Activated naive CD4-positive, alpha-beta T cell treated with anti-CD3 and anti-CD28 coated beads for 36 hours (primary cell): ENCODE measurements at regions of chr2 and their contacts with region 1.

Region 1: GRCh38 chr2:74250189-74250631 is 51.8 kb downstream of the MTHFD2 start:
- DNase-seq: peak; percentile 68
- H3K4me3 Mint-ChIP-seq: no peak overlapping the region
- H3K27ac Mint-ChIP-seq: no peak overlapping the region
- H3K4me1 Mint-ChIP-seq: peaks cover 2% of the 10 kb centered on the region
- H3K27me3 Mint-ChIP-seq: no peaks in the 10 kb centered on the region

Region 2: GRCh38 chr2:74261204-74261864 is 11.1 kb after region 1 on chr2:
- CTCF ChIA-PET with region 1: interaction called, 13 read pairs
- intact Hi-C with region 1: no loop called
- DNase-seq: peak; percentile 24
- H3K4me3 Mint-ChIP-seq: no peak overlapping the region
- H3K27ac Mint-ChIP-seq: no peak overlapping the region
- H3K4me1 Mint-ChIP-seq: peaks cover 2% of the 10 kb centered on the region
- H3K27me3 Mint-ChIP-seq: no peaks in the 10 kb centered on the region

Region 3: DNA sequence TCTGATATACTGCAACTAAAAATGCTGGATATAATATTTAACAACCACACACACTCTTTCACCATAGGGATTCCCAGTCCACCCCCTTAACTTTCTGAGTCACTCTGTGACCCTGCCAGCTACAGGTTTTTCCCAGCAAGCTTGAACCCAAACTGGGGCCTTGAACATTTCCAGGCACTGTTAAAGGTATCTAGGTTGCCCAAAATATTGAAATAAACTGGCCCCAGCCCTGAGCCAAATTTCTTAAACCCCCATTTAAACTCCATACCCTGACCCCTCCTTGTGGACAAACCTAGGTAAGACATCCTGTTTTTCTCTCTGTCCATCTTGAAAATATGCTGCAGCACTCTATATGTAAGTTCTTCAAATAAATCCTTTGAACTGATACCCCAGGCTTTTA is 149.6 kb after region 1 on chr2:
- CTCF ChIA-PET with region 1: interaction called, 6 read pairs
- intact Hi-C with region 1: loop called (anchors 1 kb)
- DNase-seq: no peak
- H3K4me3 Mint-ChIP-seq: no peak overlapping the region
- H3K27ac Mint-ChIP-seq: no peak overlapping the region
- H3K4me1 Mint-ChIP-seq: no peaks in the 10 kb centered on the region
- H3K27me3 Mint-ChIP-seq: no peaks in the 10 kb centered on the region